Heart right ventricle (tissue), 16 donors: ENCODE measurements at regions of chr1 and their contacts with region 1.

Region 1: GRCh38 chr1:190908691-190909090 is 431.0 kb upstream of the BRINP3 start:
- DNase-seq: no peak
- ATAC-seq: no peak
- H3K4me3 ChIP-seq: no peak overlapping the region
- H3K27ac ChIP-seq: no peak overlapping the region
- H3K4me1 ChIP-seq: no peaks in the 10 kb centered on the region
- H3K27me3 ChIP-seq: no peaks in the 10 kb centered on the region
- CTCF ChIP-seq: no peak

Region 2: GRCh38 chr1:190551638-190552037 is 357.1 kb before region 1 on chr1:
- intact Hi-C with region 1: loop called in 1 of 10 experiments (anchors 5 kb)
- DNase-seq: no peak
- ATAC-seq: no peak
- H3K4me3 ChIP-seq: no peak overlapping the region
- H3K27ac ChIP-seq: no peak overlapping the region
- H3K4me1 ChIP-seq: no peaks in the 10 kb centered on the region
- H3K27me3 ChIP-seq: no peaks in the 10 kb centered on the region
- CTCF ChIP-seq: no peak